Panc1 (cell line): ENCODE measurements at regions of chr9 and their contacts with region 1.

Region 1: DNA sequence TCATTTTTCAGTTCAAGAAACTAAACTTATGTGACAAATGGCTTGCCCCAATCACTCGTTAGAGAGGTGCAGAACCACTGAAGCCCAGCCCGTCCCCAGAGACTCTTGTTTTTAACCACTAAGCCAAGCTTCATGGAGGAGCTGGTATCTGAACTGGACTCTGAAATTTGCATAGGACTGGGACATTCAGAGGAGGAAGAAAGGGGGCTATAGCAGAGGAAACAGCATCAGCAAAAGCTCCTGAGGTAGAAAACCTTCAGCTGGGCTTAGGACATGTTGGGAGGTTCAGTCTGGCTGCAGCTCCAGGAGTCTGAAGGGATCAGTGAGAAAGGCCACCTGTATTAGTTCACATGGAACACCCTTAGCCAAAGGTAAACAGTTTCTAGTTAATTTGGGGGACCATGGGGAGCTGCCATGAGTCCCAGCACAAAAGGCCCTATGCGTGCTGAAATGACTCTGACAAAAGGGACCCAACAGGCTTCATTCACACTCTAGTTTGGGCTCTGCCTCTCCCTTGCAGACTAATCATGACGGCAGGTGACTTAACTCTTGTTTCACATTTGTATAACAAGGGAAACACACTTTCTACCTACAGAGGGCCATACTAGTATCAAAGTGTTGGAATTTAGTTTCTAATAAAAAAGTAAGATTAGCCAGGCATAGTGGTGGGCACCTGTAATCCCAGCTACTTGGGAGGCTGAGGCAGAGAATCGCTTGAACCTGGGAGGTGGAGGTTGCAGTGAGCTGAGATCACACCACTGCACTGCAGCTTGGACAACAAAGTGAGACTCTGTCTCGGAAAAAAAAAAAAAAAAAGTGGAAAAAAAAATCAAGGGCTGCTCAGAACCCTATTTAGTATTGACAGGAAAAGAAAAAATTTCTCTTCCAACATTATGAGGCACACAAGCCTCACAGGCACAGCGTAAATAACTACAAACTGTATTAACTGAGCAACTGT is 10.2 kb downstream of the FBXO10 start:
- DNase-seq: no peak
- ATAC-seq: no peak
- H3K4me3 ChIP-seq: no peak overlapping the region
- H3K27ac ChIP-seq: no peak overlapping the region
- H3K4me1 ChIP-seq: no peaks in the 10 kb centered on the region
- H3K27me3 ChIP-seq: no peaks in the 10 kb centered on the region
- CTCF ChIP-seq: no peak

Region 2: GRCh38 chr9:37521111-37521510 is 44.8 kb before region 1 on chr9:
- CTCF ChIA-PET with region 1: no interaction called
- POLR2A ChIA-PET with region 1: no interaction called
- in situ Hi-C with region 1: no loop called
- intact Hi-C with region 1: no loop called
- DNase-seq: no peak
- ATAC-seq: no peak
- H3K4me3 ChIP-seq: no peak overlapping the region
- H3K27ac ChIP-seq: no peak overlapping the region
- H3K4me1 ChIP-seq: no peaks in the 10 kb centered on the region
- H3K27me3 ChIP-seq: no peaks in the 10 kb centered on the region
- CTCF ChIP-seq: no peak

Region 3: GRCh38 chr9:37547328-37547878 is 18.5 kb before region 1 on chr9:
- CTCF ChIA-PET with region 1: no interaction called
- POLR2A ChIA-PET with region 1: interaction called, 11 read pairs
- in situ Hi-C with region 1: no loop called
- intact Hi-C with region 1: no loop called
- DNase-seq: no peak
- ATAC-seq: no peak
- H3K4me3 ChIP-seq: no peak overlapping the region
- H3K27ac ChIP-seq: no peak overlapping the region
- H3K4me1 ChIP-seq: peaks cover 16% of the 10 kb centered on the region
- H3K27me3 ChIP-seq: no peaks in the 10 kb centered on the region
- CTCF ChIP-seq: no peak

Region 4: DNA sequence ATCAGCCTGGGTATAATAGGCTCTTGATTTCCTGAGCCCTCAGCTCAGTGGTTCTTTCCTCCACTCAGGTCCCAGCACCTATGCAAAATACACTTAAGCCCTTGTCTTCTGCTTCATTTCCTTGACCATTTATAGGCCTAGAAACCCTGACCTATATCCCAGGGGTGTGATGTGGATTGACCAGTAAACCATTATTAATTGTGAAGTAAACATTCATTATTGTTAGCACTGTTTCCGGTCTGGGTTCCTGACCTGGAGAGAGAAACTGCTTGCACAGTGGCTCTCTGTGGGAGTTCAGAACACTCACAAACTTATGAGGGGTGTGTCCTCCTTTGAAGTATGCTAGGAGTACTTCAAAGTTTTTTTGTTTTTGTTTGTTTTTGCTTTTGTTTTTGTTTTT is 46.0 kb after region 1 on chr9:
- CTCF ChIA-PET with region 1: no interaction called
- POLR2A ChIA-PET with region 1: no interaction called
- in situ Hi-C with region 1: no loop called
- intact Hi-C with region 1: no loop called
- DNase-seq: no peak
- ATAC-seq: no peak; the same call in 1 of the 2 replicates
- H3K4me3 ChIP-seq: no peak overlapping the region
- H3K27ac ChIP-seq: no peak overlapping the region
- H3K4me1 ChIP-seq: no peaks in the 10 kb centered on the region
- H3K27me3 ChIP-seq: peaks cover 27% of the 10 kb centered on the region; the same call in 1 of the 2 replicates
- CTCF ChIP-seq: no peak

Region 5: GRCh38 chr9:37656936-37657335 is 91.0 kb after region 1 on chr9:
- CTCF ChIA-PET with region 1: no interaction called
- POLR2A ChIA-PET with region 1: no interaction called
- in situ Hi-C with region 1: no loop called
- intact Hi-C with region 1: no loop called
- DNase-seq: no peak
- ATAC-seq: no peak
- H3K4me3 ChIP-seq: no peak overlapping the region
- H3K27ac ChIP-seq: no peak overlapping the region
- H3K4me1 ChIP-seq: no peaks in the 10 kb centered on the region
- H3K27me3 ChIP-seq: peaks cover 28% of the 10 kb centered on the region
- CTCF ChIP-seq: no peak